ENCODE measurements at regions of chr5 and their contacts with region 1.

Region 1: DNA sequence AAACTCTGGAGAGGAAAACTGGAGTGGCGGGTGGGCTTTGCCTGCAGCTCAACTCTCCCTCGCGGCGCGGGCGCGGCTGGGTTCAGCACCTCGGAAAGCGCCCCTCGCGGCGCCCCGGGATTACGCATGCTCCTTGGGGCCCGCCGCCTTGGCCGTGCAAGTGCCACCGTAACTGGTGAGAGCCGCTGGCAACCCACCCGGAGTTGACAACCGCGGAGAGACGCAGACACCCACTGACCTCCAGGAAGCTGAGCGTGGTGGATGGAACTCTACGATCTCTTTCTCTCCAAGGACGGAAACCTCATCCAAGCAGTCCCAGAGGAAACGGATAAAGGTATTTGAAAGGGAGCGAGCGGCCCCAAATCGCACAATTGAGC is 194 bp upstream of the RXFP3 start:
- DNase-seq: peak; percentile 46
- H3K4me3 ChIP-seq: peak overlapping the region in 1 of 3 experiments; percentile 3
- H3K27ac ChIP-seq: no peak overlapping the region
- H3K4me1 ChIP-seq: peaks cover 14% of the 10 kb centered on the region
- H3K27me3 ChIP-seq: peaks cover 40 to 49% of the 10 kb centered on the region in 2 experiments
- CTCF ChIP-seq: peak in 1 of 2 donors; percentile 17
- POLR2A ChIP-seq: no peak

Region 2: DNA sequence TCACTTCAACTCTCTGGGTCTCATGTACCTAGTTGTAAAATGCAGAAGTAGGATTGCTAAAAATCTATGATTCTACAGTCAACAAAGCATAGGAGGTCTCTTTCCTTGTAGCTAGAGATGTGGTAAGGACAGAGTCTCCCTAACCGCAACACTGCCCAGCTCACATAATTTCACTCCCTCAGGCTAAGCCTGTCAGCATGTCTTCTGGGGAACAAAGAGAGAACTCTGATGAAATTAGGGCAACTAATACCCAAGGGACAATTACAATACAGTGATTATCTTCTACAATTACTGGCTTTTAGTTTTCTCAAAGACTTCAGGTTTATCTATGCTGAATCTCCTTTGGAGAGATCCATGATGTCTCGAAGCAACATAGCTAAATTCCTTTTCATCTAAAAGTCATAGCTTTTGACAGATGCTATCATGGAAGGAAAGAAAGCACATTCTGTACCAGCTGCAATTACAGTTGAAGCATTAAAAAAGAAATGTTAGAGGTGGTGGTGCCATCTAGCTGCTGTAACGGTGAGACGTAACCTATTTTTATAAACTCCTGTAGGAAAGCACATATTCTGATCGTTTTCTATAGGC is 636.3 kb before region 1 on chr5:
- CTCF ChIA-PET with region 1: no interaction called
- POLR2A ChIA-PET with region 1: no interaction called
- dilution Hi-C with region 1: no loop called
- intact Hi-C with region 1: no loop called
- DNase-seq: peak; percentile 79
- H3K4me3 ChIP-seq: no peak overlapping the region
- H3K27ac ChIP-seq: no peak overlapping the region
- H3K4me1 ChIP-seq: no peaks in the 10 kb centered on the region
- H3K27me3 ChIP-seq: no peaks in the 10 kb centered on the region
- CTCF ChIP-seq: peak; percentile 24 to 44
- POLR2A ChIP-seq: no peak

Region 3: DNA sequence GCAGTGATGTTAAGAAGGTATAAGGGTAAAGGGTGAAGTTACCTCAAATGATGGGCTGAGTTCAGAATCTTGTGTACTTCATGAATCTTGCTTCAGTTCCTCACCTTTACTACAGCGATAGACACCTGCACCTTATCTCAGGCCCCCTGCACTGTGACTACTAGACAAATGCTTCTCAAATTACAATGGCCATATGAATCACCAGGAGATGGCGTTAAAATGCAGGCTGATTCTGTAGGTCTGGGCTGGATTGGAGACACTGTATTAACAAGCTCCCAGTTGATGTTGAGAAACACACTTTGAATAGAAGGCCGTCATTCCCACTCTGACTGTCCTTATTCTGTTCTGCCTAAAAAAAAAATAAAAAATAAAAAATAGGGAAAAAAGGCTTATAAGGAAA is 465.4 kb before region 1 on chr5:
- CTCF ChIA-PET with region 1: interaction called, 43 read pairs
- POLR2A ChIA-PET with region 1: no interaction called
- dilution Hi-C with region 1: no loop called
- intact Hi-C with region 1: loop called (anchors 1 kb)
- DNase-seq: peak; percentile 28
- H3K4me3 ChIP-seq: no peak overlapping the region
- H3K27ac ChIP-seq: no peak overlapping the region
- H3K4me1 ChIP-seq: no peaks in the 10 kb centered on the region
- H3K27me3 ChIP-seq: no peaks in the 10 kb centered on the region
- CTCF ChIP-seq: peak in 1 of 2 donors; percentile 14
- POLR2A ChIP-seq: no peak

Region 4: GRCh38 chr5:33583329-33583728 is 352.7 kb before region 1 on chr5:
- CTCF ChIA-PET with region 1: interaction called, 345 read pairs
- POLR2A ChIA-PET with region 1: no interaction called
- dilution Hi-C with region 1: no loop called
- intact Hi-C with region 1: no loop called
- DNase-seq: no peak
- H3K4me3 ChIP-seq: no peak overlapping the region
- H3K27ac ChIP-seq: no peak overlapping the region
- H3K4me1 ChIP-seq: no peaks in the 10 kb centered on the region
- H3K27me3 ChIP-seq: peaks cover 0 to 2% of the 10 kb centered on the region in 2 experiments
- CTCF ChIP-seq: no peak
- POLR2A ChIP-seq: no peak

Region 5: DNA sequence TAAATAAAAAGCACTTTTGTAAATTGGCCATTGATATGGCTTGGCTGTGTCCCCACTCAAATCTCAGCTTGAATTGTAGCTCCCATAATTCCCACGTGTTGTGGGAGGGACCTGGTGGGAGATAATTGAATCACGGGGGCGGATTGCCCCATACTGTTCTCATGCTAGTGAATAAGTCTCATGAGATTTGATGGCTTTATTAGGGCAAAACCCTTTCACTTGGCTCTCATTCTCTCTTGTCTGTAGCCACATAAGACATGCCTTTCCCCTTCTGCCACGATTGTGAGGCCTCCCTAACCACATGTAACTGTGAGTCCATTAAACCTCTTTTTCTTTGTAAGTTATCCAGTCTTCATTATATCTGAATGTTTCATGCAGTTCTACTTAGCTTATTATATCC is 342.0 kb before region 1 on chr5:
- CTCF ChIA-PET with region 1: interaction called, 345 read pairs
- POLR2A ChIA-PET with region 1: no interaction called
- dilution Hi-C with region 1: no loop called
- intact Hi-C with region 1: no loop called
- DNase-seq: no peak
- H3K4me3 ChIP-seq: no peak overlapping the region
- H3K27ac ChIP-seq: no peak overlapping the region
- H3K4me1 ChIP-seq: no peaks in the 10 kb centered on the region
- H3K27me3 ChIP-seq: no peaks in the 10 kb centered on the region
- CTCF ChIP-seq: no peak
- POLR2A ChIP-seq: no peak

Region 6: DNA sequence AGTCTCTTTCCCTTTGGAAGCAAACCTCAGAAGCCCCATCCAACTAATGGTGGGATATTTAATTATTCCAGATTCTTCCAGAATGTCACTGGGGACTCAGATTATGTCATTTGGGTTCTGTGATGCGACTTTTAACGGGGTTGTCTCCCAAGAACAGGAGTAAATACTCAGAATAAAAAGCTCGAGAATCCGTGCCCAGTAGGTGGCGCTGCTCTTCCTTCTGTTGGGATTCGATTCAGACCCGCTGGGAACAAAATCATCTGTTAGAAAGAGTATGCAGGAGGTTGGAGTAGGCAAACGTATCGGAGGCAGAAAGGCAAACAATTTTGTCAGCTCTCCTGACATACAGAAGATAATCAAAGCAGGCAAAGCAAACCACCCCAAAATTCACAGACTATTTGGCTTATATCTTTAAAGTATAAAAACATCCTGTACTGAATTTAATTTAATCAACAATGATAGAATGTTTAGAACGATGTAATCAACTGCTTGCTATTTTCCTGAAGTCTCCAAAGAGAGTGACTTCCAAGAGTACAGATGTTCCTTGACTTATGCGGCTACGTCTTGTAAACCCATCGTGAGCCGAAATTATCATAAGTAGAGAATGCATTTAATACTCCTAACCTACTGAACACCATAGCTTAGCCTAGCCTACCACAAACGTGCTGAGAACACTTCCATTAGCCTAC is 550.3 kb after region 1 on chr5:
- CTCF ChIA-PET with region 1: no interaction called
- POLR2A ChIA-PET with region 1: no interaction called
- dilution Hi-C with region 1: no loop called
- intact Hi-C with region 1: no loop called
- DNase-seq: peak; percentile 87
- H3K4me3 ChIP-seq: no peak overlapping the region
- H3K27ac ChIP-seq: peak overlapping the region; percentile 78
- H3K4me1 ChIP-seq: peaks cover 19% of the 10 kb centered on the region
- H3K27me3 ChIP-seq: peaks cover 0 to 7% of the 10 kb centered on the region in 2 experiments
- CTCF ChIP-seq: peak; percentile 68 to 78
- POLR2A ChIP-seq: no peak